Panc1 (cell line): ENCODE measurements at regions of chrX and their contacts with region 1.

Region 1: GRCh38 chrX:133287860-133288259 is 69.7 kb upstream of the TFDP3 start:
- DNase-seq: no peak
- ATAC-seq: no peak
- H3K4me3 ChIP-seq: no peak overlapping the region
- H3K27ac ChIP-seq: no peak overlapping the region
- H3K4me1 ChIP-seq: no peaks in the 10 kb centered on the region
- H3K27me3 ChIP-seq: no peaks in the 10 kb centered on the region
- CTCF ChIP-seq: no peak

Region 2: DNA sequence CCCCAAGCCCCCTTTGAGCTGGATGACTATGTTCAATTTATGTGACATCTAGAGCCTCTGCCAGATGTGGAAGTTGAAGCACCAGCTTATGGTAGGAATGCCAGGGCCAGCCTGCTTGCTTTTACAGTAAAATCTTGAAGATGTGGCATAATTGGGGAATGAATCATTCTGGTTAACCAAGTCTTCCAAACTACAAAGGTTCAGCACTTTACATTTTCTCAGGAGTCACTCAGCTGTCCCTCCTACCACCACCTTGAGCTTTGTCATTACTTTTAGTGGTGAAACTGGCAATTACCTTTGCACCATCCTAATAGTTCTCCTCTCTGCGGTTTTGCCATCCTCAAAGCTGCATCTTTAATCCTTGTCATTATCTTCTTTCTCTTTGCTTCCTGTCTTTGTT is 501.6 kb before region 1 on chrX:
- CTCF ChIA-PET with region 1: no interaction called
- POLR2A ChIA-PET with region 1: interaction called, 12 read pairs
- in situ Hi-C with region 1: no loop called
- intact Hi-C with region 1: no loop called
- DNase-seq: no peak
- ATAC-seq: no peak
- H3K4me3 ChIP-seq: no peak overlapping the region
- H3K27ac ChIP-seq: no peak overlapping the region
- H3K4me1 ChIP-seq: no peaks in the 10 kb centered on the region
- H3K27me3 ChIP-seq: no peaks in the 10 kb centered on the region
- CTCF ChIP-seq: no peak